ENCODE measurements at regions of chr10 and their contacts with region 1.

Region 1: GRCh38 chr10:26540601-26541000 is 102.5 kb downstream of the APBB1IP start:
- DNase-seq: no peak
- H3K27ac ChIP-seq: no peak overlapping the region
- CTCF ChIP-seq: no peak

Region 2: GRCh38 chr10:26527018-26527417 is 13.6 kb before region 1 on chr10:
- CTCF ChIA-PET with region 1: interaction called, 12 read pairs
- POLR2A ChIA-PET with region 1: no interaction called
- DNase-seq: no peak
- H3K27ac ChIP-seq: no peak overlapping the region
- CTCF ChIP-seq: no peak

Measured in RWPE1 (cell line).